Posterior vena cava (tissue), 2 donors: ENCODE measurements at regions of chr9 and their contacts with region 1.

Region 1: DNA sequence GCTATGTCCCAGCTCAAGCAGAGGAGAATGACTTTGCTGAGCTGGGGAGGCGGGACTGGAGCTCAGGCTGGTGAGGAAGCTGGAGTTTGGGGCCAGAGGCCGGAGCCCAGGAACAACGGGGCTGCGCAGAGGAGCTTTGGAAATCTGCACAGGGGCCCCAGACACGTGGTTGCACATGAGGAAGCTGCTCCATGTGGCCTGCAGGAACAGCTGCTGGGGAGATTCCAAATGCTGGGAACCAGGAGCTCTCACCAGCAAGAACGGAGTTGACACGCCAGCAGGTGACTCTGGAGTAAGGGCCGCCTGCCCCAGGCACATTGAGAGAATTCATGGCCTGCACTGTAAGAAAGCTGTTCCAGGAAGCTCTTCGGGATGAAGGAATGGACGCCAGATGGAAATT is 91.0 kb downstream of the OLFM1 start:
- DNase-seq: no peak

Region 2: GRCh38 chr9:135363596-135363995 is 185.1 kb after region 1 on chr9:
- intact Hi-C with region 1: loop called in 1 of 2 experiments (anchors 5 kb)
- DNase-seq: no peak